PC-9 (cell line): ENCODE measurements at regions of chrX and their contacts with region 1.

Region 1: GRCh38 chrX:99398545-99398944 is 1011.5 kb downstream of the PCDH19 start:
- DNase-seq: no peak
- H3K4me3 ChIP-seq: no peak overlapping the region
- H3K27ac ChIP-seq: no peak overlapping the region
- H3K4me1 ChIP-seq: no peaks in the 10 kb centered on the region
- H3K27me3 ChIP-seq: no peaks in the 10 kb centered on the region
- CTCF ChIP-seq: no peak

Region 2: DNA sequence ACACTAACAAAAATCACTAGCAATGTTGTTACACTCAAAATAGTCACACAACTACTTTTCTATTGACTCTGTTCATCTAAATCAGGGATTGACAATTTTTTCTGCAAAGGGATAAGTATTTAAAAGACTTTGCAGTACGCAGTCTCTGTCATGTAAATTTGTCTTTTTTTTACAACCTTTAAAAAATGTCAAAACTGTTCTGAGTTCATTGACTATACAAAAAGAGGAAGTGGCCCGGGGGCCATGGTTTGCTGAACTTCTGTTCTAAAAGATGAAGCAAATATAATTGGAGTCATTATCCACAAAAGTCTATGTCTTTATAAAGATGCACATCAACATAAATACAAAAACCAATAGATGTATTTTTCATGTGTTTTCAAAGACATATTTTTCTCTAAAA is 1204.5 kb before region 1 on chrX:
- CTCF ChIA-PET with region 1: interaction called, 11 read pairs
- POLR2A ChIA-PET with region 1: no interaction called
- intact Hi-C with region 1: no loop called
- DNase-seq: no peak
- H3K4me3 ChIP-seq: no peak overlapping the region
- H3K27ac ChIP-seq: no peak overlapping the region
- H3K4me1 ChIP-seq: no peaks in the 10 kb centered on the region
- H3K27me3 ChIP-seq: no peaks in the 10 kb centered on the region
- CTCF ChIP-seq: no peak

Region 3: DNA sequence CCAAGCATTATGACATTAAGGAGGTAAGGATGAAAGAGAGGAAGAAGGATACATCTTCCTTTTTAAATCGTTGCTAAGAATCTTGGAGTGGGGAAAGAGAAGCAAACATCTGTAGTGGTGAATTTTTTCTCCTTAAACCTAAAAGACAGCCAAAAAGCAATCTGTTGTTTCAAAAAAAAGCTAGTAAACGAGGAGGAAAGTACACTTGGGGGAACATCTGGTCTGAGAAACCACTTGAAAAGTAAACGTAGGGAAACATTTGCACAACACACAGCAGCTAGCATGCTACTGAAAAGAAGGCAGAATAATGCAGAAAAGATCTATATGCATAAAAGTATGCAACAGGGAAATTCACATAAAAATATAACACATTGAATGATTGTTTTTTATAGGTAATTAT is 474.0 kb before region 1 on chrX:
- CTCF ChIA-PET with region 1: no interaction called
- POLR2A ChIA-PET with region 1: no interaction called
- intact Hi-C with region 1: no loop called
- DNase-seq: no peak
- H3K4me3 ChIP-seq: no peak overlapping the region
- H3K27ac ChIP-seq: no peak overlapping the region
- H3K4me1 ChIP-seq: no peaks in the 10 kb centered on the region
- H3K27me3 ChIP-seq: no peaks in the 10 kb centered on the region
- CTCF ChIP-seq: no peak

Region 4: GRCh38 chrX:99413317-99413716 is 14.8 kb after region 1 on chrX:
- CTCF ChIA-PET with region 1: no interaction called
- POLR2A ChIA-PET with region 1: no interaction called
- intact Hi-C with region 1: no loop called
- DNase-seq: no peak
- H3K4me3 ChIP-seq: no peak overlapping the region
- H3K27ac ChIP-seq: no peak overlapping the region
- H3K4me1 ChIP-seq: no peaks in the 10 kb centered on the region
- H3K27me3 ChIP-seq: no peaks in the 10 kb centered on the region
- CTCF ChIP-seq: no peak

Region 5: DNA sequence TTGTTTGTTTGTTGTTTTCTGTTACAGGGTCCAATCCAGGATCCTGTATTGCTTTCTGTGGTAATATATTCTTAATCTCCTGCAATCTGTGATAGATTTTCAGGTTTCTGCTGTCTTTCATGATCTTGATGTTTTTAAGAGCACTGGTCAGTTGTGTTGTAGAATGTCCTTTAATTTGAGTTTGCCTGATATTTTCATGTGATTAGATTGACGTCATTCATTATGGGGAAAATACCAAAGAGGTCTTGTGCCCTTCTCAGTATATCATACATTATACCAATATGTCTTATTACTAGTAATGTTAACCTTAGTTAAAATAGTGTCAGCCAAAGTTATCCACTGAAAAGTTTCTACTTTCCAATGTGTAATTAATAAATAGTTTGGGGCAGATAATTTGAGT is 82.2 kb after region 1 on chrX:
- CTCF ChIA-PET with region 1: no interaction called
- POLR2A ChIA-PET with region 1: no interaction called
- intact Hi-C with region 1: no loop called
- DNase-seq: no peak
- H3K4me3 ChIP-seq: no peak overlapping the region
- H3K27ac ChIP-seq: no peak overlapping the region
- H3K4me1 ChIP-seq: no peaks in the 10 kb centered on the region
- H3K27me3 ChIP-seq: no peaks in the 10 kb centered on the region
- CTCF ChIP-seq: no peak

Region 6: DNA sequence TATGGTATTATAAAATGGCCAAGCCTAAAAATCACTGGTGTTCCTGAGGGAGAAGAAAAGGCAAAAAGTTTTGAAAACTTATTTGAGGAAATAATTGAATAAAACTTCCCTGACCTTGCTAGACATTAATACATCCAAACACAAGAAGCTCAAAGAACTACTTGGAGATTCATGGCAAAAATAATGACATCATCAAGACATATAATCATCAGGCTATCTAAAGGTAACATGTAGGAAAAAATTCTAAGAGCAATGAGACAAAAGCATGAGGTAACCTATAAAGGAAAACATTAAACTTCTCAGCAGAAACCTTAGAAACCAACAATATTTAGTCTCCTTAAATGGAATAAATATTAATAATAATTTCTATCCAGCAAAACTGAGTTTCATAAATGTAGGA is 123.9 kb after region 1 on chrX:
- CTCF ChIA-PET with region 1: no interaction called
- POLR2A ChIA-PET with region 1: no interaction called
- intact Hi-C with region 1: no loop called
- DNase-seq: no peak
- H3K4me3 ChIP-seq: no peak overlapping the region
- H3K27ac ChIP-seq: no peak overlapping the region
- H3K4me1 ChIP-seq: no peaks in the 10 kb centered on the region
- H3K27me3 ChIP-seq: no peaks in the 10 kb centered on the region
- CTCF ChIP-seq: no peak